PC-3 (cell line): ENCODE measurements at regions of chr17 and their contacts with region 1.

Region 1: GRCh38 chr17:74493381-74493833 is 27.0 kb downstream of the CD300A start:
- DNase-seq: peak; percentile 88
- ATAC-seq: peak; percentile 97
- H3K4me3 ChIP-seq: no peak overlapping the region
- H3K27ac ChIP-seq: no peak overlapping the region
- H3K4me1 ChIP-seq: no peaks in the 10 kb centered on the region
- H3K27me3 ChIP-seq: peaks cover 13% of the 10 kb centered on the region
- CTCF ChIP-seq: peak; percentile 96

Region 2: DNA sequence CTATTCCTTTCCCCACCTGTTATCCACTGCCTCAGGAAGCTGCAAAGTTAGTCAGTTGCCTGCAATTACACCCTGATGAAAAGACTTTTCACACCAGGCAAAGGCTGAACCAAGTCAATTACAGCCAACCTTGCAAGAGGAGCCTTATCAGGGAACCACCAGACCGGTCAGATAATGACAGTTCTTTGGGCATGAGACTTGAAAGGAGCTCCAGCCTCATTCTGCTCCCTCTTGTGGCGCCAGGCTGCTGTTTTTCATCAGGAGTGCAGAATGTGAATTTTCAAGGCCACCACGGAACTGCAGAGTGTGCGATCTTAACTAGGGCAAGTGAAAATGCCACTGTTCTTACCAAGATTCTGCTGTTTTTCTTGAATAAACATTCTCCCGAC is 196.9 kb before region 1 on chr17:
- CTCF ChIA-PET with region 1: no interaction called
- POLR2A ChIA-PET with region 1: no interaction called
- intact Hi-C with region 1: loop called (anchors 1 kb)
- DNase-seq: peak; percentile 67
- ATAC-seq: peak; percentile 68
- H3K4me3 ChIP-seq: no peak overlapping the region
- H3K27ac ChIP-seq: no peak overlapping the region
- H3K4me1 ChIP-seq: peaks cover 21% of the 10 kb centered on the region
- H3K27me3 ChIP-seq: no peaks in the 10 kb centered on the region
- CTCF ChIP-seq: peak; percentile 83

Region 3: GRCh38 chr17:74368092-74369081 is 125.0 kb before region 1 on chr17:
- CTCF ChIA-PET with region 1: interaction called, 5 read pairs
- POLR2A ChIA-PET with region 1: no interaction called
- intact Hi-C with region 1: loop called (anchors 1 kb)
- DNase-seq: peak; percentile 84
- ATAC-seq: peak; percentile 88
- H3K4me3 ChIP-seq: no peak overlapping the region
- H3K27ac ChIP-seq: no peak overlapping the region
- H3K4me1 ChIP-seq: 0 out of 2 replicates have a peak, but pooled peaks cover 4% of the 10 kb centered on the region
- H3K27me3 ChIP-seq: 0 out of 2 replicates have a peak, but pooled peaks cover 6% of the 10 kb centered on the region
- CTCF ChIP-seq: peak; percentile 98

Region 4: GRCh38 chr17:74457146-74457819 is 36.1 kb before region 1 on chr17:
- CTCF ChIA-PET with region 1: interaction called, 3 read pairs
- POLR2A ChIA-PET with region 1: no interaction called
- intact Hi-C with region 1: loop called (anchors 1 kb)
- DNase-seq: peak; percentile 88
- ATAC-seq: peak; percentile 17; the same call in 1 of the 2 replicates
- H3K4me3 ChIP-seq: no peak overlapping the region
- H3K27ac ChIP-seq: no peak overlapping the region
- H3K4me1 ChIP-seq: peaks cover 14% of the 10 kb centered on the region
- H3K27me3 ChIP-seq: no peaks in the 10 kb centered on the region
- CTCF ChIP-seq: peak; percentile 99

Region 5: GRCh38 chr17:74528491-74529199 is 35.2 kb after region 1 on chr17:
- CTCF ChIA-PET with region 1: no interaction called
- POLR2A ChIA-PET with region 1: no interaction called
- intact Hi-C with region 1: loop called (anchors 2 kb)
- DNase-seq: no peak
- ATAC-seq: no peak
- H3K4me3 ChIP-seq: no peak overlapping the region
- H3K27ac ChIP-seq: no peak overlapping the region
- H3K4me1 ChIP-seq: no peaks in the 10 kb centered on the region
- H3K27me3 ChIP-seq: peaks cover 78% of the 10 kb centered on the region
- CTCF ChIP-seq: no peak

Region 6: DNA sequence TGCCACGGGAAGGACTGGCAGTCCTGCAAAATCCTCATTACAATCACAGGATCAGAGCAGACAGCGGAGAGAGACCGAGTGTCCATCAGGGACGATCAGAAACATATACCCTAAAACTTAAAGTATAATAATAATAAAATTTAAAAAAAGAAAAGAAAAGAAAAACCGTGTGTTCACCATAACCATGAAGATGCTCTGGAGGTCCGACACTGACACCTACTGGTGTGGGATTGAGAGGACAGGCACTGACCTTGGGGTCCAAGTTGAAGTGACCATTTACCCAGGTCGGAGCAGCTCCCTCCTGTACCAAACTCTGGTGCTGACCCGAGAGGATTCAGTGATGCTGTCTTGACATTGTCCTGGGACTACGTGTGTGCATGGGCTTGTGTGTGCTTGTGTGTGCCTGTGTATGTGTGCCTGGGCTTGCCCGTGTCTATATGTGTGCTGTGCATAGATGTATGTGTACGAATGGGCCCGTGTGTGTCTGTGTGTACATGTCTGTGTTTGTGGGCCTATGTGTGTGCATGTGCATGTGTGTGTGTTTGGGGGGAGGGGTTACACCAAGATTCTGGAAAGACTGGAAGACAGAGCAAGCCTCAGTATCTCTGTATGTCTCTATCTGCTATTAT is 108.7 kb after region 1 on chr17:
- CTCF ChIA-PET with region 1: no interaction called
- POLR2A ChIA-PET with region 1: no interaction called
- intact Hi-C with region 1: loop called (anchors 1 kb)
- DNase-seq: peak; percentile 73
- ATAC-seq: peak; percentile 63
- H3K4me3 ChIP-seq: no peak overlapping the region
- H3K27ac ChIP-seq: no peak overlapping the region
- H3K4me1 ChIP-seq: peaks cover 8% of the 10 kb centered on the region
- H3K27me3 ChIP-seq: peaks cover 53% of the 10 kb centered on the region
- CTCF ChIP-seq: peak; percentile 76

Region 7: GRCh38 chr17:75109407-75110233 is 616.2 kb after region 1 on chr17 and contains the start of gene ARMC7:
- CTCF ChIA-PET with region 1: no interaction called
- POLR2A ChIA-PET with region 1: no interaction called
- intact Hi-C with region 1: no loop called
- DNase-seq: peak; percentile 96
- ATAC-seq: peak; percentile 63
- H3K4me3 ChIP-seq: peak within 1 kb of the TSS; percentile 97
- H3K27ac ChIP-seq: no peak within 1 kb of the TSS
- H3K4me1 ChIP-seq: peaks cover 35% of the 10 kb centered on the region
- H3K27me3 ChIP-seq: no peaks in the 10 kb centered on the region
- CTCF ChIP-seq: peak; percentile 19; the same call in 1 of the 2 replicates
- total RNA-seq, gene ARMC7: 17.0 and 17.3 TPM in 2 replicates